ENCODE measurements at regions of chr6 and their contacts with region 1.

Region 1: DNA sequence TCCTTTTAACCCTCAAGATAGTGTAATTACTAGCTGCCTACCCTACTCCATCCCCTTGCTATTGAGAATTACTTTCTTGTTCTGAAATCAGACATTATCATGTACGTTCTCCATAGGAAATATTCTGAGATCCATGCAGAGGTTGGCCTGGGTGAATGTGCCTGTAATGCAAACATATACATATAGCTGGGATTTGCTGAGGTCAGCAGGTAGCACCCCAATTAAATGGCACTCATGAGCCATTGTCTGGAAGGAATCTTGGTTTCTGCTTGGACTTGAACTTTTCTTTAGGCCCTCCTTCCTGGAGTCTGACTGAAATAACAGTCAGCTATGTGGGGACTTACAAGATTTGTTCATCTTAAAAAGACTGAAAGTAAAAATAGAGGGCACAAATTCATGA is 3.7 kb downstream of the HLA-DQB2 start:
- DNase-seq: no peak
- H3K4me3 Mint-ChIP-seq: no peak overlapping the region
- H3K27ac Mint-ChIP-seq: no peak overlapping the region
- H3K4me1 Mint-ChIP-seq: no peaks in the 10 kb centered on the region
- H3K27me3 Mint-ChIP-seq: peaks cover 100% of the 10 kb centered on the region
- CTCF ChIP-seq: no peak

Region 2: DNA sequence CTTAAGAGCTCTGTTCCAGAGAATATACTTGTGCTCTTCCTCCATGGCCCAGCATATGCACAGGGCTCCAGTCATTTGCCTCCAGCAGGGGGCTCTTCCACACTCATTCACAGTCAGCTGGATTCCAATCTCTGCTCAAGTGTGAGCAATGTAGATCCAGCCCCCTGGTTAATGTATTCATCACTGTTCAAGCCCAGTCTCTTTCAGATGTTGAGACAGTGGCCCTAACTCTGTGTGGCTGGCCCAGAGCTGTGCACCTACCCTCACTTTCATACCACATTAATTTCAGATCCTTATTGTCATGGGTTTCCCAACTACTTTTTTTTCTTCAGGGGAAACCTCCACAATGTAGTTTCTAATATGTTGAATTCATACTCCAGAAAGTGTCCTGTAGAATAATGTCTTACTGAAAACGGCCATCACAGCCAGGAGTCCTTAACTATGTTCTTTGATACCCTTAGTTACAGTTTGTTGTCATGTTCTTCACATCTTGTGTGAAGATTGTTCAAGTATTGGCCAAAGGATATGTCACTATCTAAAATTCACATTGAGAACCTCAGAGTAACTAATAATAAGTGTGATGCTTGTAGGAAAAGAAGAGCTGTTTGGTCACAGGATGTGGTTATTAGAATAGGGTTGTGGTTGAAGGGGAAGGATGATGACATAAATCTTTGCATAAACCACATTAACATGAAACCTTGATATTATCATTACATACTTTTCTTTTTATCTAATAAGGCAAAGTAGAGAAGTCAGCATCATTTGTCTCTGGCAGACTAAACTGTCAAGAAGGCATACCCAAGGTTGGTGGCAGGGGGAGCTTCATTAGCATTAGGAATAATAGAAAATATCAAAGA is 136.9 kb before region 1 on chr6:
- CTCF ChIA-PET with region 1: no interaction called
- intact Hi-C with region 1: no loop called
- DNase-seq: peak; percentile 59
- H3K4me3 Mint-ChIP-seq: no peak overlapping the region
- H3K27ac Mint-ChIP-seq: no peak overlapping the region
- H3K4me1 Mint-ChIP-seq: peaks cover 13% of the 10 kb centered on the region
- H3K27me3 Mint-ChIP-seq: no peaks in the 10 kb centered on the region
- CTCF ChIP-seq: no peak

Region 3: GRCh38 chr6:32663408-32663807 is 96.3 kb before region 1 on chr6:
- CTCF ChIA-PET with region 1: no interaction called
- intact Hi-C with region 1: loop called (anchors 1 kb)
- DNase-seq: no peak
- H3K4me3 Mint-ChIP-seq: peak overlapping the region; percentile 79
- H3K27ac Mint-ChIP-seq: no peak overlapping the region
- H3K4me1 Mint-ChIP-seq: peaks cover 54% of the 10 kb centered on the region
- H3K27me3 Mint-ChIP-seq: no peaks in the 10 kb centered on the region
- CTCF ChIP-seq: no peak

Measured in Calu3 (cell line).